ENCODE measurements at regions of chr1 and their contacts with region 1.

Region 1: DNA sequence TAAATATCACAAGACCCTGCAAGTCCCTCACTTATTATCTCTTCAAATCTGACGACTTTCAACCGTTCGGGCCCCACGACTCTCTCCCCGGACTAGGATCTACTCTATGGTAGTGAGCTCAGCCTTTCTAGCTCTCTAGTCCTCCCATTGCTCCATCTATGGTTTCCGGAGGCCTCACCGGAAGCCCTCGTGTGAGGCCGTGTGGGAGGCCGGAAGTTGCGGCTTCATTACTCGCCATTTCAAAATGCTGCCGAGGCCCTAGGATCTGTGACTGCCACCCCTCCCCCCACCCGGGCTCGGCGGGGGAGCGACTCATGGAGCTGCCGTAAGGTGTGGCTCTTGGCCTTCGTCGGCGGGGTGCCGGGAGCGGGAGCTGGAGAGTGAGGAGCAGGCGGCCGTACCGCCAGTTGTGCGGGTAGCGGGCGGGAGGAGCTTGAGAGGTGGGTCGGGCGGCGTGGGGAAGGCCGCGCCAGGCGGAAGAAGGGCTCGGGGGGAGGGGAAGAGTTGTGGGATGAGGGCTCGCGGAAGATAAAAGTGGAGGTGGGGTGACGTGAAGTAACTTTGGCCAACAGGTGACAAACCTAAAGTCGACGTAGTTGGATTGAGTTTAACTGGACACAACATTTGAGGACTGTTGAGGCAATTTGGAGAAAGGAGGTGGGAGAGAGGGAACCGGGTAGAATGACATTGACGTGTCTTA is at the start of gene MDM4:
- DNase-seq: peak; percentile 96 to 99
- ATAC-seq: peak; percentile 99
- H3K4me3 ChIP-seq: peak within 1 kb of the TSS; percentile 62
- H3K27ac ChIP-seq: peak within 1 kb of the TSS; percentile 96
- H3K4me1 ChIP-seq: peaks cover 12% of the 10 kb centered on the region
- CTCF ChIP-seq: no peak
- EP300 ChIP-seq: 0 out of 5 replicates have a peak, but pooled peaks of 1 of the 2 experiments have one; percentile 23
- POLR2A ChIP-seq: peak; percentile 47
- RAD21 ChIP-seq: no peak
- polyA plus RNA-seq, gene MDM4: 38.9 and 48.9 TPM in 2 replicates

Region 2: DNA sequence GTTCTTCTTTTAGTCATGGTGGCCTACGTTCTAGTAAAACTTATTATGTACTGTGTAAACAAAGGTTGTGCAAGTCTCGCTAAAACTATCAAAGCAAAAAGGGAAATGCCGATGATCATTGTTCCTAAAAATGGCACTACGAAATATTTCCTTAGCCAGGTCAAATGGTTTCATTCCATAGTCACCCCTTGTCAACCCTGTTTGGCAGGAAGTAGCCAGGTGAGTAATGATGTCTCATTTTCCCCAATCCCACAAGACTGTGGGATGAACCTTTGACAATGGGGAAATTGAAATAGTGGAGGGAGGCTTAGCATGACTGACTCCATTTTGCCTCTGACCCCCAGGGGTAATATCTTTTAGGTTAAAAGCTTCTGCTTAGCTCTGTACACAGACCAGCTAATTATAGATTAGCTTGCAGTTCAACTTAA is 344.6 kb before region 1 on chr1:
- CTCF ChIA-PET with region 1: no interaction called
- POLR2A ChIA-PET with region 1: no interaction called
- DNase-seq: peak; percentile 31 to 49
- ATAC-seq: peak in 1 of 2 experiments; percentile 49; a peak in 3 of 6 replicates
- H3K4me3 ChIP-seq: no peak overlapping the region
- H3K27ac ChIP-seq: no peak overlapping the region; a peak in 1 of 6 replicates
- H3K4me1 ChIP-seq: peaks cover 5% of the 10 kb centered on the region; the same call in 2 of the 3 replicates
- CTCF ChIP-seq: no peak
- EP300 ChIP-seq: no peak; a peak in 1 of 5 replicates
- POLR2A ChIP-seq: no peak
- RAD21 ChIP-seq: no peak

Region 3: DNA sequence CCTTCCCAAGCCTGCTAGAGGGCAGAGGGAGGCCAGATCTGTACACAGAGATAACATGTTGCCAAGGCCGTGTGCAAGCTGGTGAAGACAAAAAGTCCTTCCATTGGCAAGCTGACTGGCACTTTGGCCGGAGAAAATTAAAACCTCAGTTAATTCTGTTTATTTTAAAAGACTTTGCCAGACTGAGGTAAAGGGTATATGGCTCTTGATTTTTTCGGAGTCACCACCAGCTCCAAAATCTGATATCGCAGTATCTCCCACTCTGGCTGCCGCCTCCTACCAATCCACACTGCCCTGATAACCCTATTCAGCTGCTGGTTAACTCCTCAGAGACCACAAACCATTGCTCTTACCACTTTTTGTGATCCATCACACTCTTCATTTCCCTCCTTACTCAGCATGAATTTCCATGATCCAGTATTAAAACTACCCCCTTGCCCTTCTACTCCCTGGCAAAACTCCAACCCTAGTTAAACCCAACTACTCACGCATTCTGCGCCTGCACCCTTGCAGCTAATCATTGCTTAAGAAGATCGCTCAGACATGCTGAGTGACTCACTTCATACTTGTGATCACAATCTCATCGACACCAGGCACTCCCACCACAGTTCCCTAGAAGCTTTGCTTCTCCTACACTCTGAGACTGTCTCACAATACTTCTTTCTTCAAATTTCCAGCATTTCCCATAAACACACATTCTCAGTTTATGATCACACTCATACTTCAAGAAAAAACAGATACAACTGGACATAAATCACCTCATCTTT is 98.9 kb before region 1 on chr1:
- CTCF ChIA-PET with region 1: no interaction called
- POLR2A ChIA-PET with region 1: interaction called, 10 read pairs
- DNase-seq: peak; percentile 94 to 97
- ATAC-seq: peak; percentile 91 to 96
- H3K4me3 ChIP-seq: peak overlapping the region; percentile 42
- H3K27ac ChIP-seq: peak overlapping the region; percentile 98 to 100
- H3K4me1 ChIP-seq: peaks cover 76% of the 10 kb centered on the region
- CTCF ChIP-seq: no peak
- EP300 ChIP-seq: peak in 1 of 2 experiments; percentile 38; a peak in 2 of 5 replicates
- POLR2A ChIP-seq: no peak
- RAD21 ChIP-seq: no peak

Region 4: DNA sequence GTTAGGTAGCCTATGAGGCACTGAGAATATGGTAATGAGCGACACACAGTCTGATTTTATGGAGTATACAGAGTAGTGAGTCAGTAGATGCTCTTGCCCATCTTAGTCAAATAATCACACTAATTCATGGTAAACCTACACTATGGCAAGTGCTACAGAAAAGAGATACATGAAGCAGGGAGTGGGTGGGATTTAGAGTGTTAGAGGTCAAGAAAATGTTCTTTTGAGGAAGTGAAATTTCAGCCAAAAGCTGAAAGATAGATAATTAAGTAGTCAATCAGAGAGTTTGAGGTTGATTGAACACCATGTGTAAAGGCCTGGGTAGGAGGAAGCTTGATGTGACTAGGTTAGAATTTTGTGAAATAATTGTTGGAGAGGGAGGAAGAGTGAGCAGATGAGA is 14.6 kb after region 1 on chr1:
- CTCF ChIA-PET with region 1: interaction called, 3 read pairs
- POLR2A ChIA-PET with region 1: interaction called, 20 read pairs
- DNase-seq: no peak
- ATAC-seq: no peak
- H3K4me3 ChIP-seq: no peak overlapping the region
- H3K27ac ChIP-seq: no peak overlapping the region
- H3K4me1 ChIP-seq: no peaks in the 10 kb centered on the region
- CTCF ChIP-seq: no peak
- EP300 ChIP-seq: no peak
- POLR2A ChIP-seq: no peak
- RAD21 ChIP-seq: no peak

Region 5: GRCh38 chr1:204583906-204584632 is 67.7 kb after region 1 on chr1:
- CTCF ChIA-PET with region 1: no interaction called
- POLR2A ChIA-PET with region 1: no interaction called
- DNase-seq: no peak
- ATAC-seq: no peak
- H3K4me3 ChIP-seq: no peak overlapping the region
- H3K27ac ChIP-seq: no peak overlapping the region
- H3K4me1 ChIP-seq: no peaks in the 10 kb centered on the region
- CTCF ChIP-seq: no peak
- EP300 ChIP-seq: no peak
- POLR2A ChIP-seq: no peak
- RAD21 ChIP-seq: no peak